Activated CD4-positive, alpha-beta T cell treated with anti-CD3 and anti-CD28 coated beads for 36 hours (primary cell): ENCODE measurements at regions of chr15 and their contacts with region 1.

Region 1: DNA sequence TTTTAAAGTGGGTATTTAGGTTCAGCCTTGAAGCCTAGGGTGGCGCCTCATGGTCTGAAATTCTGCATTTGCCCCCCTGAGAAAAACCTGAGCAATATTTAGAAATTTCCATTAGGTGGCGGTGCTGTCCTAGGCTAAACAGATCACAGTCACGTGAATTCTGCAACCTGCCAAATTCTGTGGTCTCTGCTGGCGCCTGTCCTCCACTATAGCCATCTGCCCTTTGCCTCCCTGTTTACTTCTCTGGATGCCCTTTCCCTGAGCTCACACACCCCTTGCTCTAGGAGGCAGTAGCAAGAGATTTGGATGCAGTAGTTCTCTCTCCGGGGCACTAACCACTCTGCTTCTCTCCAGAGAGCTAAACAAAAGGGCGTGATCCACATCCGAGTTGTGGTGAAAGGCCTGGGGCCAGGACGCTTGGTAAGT is 9.1 kb downstream of the MRPS11 start:
- DNase-seq: peak; percentile 28
- ATAC-seq: peak; percentile 60
- H3K4me3 Mint-ChIP-seq: no peak overlapping the region
- H3K27ac Mint-ChIP-seq: no peak overlapping the region
- H3K4me1 Mint-ChIP-seq: peaks cover 9% of the 10 kb centered on the region
- H3K27me3 Mint-ChIP-seq: no peaks in the 10 kb centered on the region

Region 2: DNA sequence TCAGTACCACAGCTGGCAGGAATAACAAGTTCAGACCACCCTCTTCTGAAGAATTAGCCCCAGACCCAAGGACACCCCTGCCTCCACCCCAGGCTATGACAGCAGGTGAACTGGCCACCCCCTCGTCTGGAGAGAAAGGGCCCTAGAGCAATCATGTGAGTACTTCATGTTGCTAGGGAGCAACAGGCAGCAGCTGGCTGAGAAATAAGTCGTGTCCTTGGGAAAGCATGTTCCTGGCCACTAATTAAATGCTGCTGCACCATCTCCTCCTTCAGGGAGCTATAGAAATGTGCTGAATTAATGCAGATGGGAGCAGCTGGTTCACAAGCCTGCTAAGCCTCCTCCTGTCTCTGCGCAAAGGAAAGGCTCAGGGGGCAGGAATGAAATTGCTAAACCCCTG is 22.3 kb after region 1 on chr15:
- CTCF ChIA-PET with region 1: no interaction called
- POLR2A ChIA-PET with region 1: no interaction called
- intact Hi-C with region 1: no loop called
- DNase-seq: no peak
- ATAC-seq: no peak
- H3K4me3 Mint-ChIP-seq: no peak overlapping the region
- H3K27ac Mint-ChIP-seq: no peak overlapping the region
- H3K4me1 Mint-ChIP-seq: no peaks in the 10 kb centered on the region
- H3K27me3 Mint-ChIP-seq: no peaks in the 10 kb centered on the region

Region 3: DNA sequence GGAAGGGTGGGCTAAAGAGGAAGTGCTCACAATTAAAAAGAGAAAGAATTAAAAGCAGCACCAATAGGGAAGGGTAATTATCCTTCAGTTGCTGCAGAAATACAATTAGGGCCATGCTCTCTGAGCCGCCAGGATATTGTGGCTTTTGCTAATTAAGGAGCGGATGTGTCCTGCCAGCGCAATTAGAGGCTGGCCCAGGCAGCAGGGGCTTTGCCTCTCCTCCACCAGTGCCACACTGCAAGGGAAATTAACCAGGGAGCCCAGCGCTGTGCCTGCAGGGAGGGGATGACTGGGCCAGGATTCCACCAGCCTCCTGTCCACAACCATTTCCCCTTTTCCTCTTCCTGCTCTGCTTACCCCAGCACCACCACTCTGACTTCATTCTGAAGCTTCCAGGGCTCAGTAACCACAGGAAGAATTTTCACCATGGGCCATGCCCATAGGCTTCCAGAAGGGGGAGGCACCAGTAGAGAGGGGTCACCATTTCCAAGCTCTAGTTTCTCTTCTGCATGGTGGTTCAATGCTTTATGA is 134.1 kb after region 1 on chr15:
- CTCF ChIA-PET with region 1: no interaction called
- POLR2A ChIA-PET with region 1: no interaction called
- intact Hi-C with region 1: loop called in 1 of 2 experiments (anchors 1 kb)
- DNase-seq: no peak
- ATAC-seq: no peak
- H3K4me3 Mint-ChIP-seq: no peak overlapping the region
- H3K27ac Mint-ChIP-seq: no peak overlapping the region
- H3K4me1 Mint-ChIP-seq: peaks cover 6% of the 10 kb centered on the region
- H3K27me3 Mint-ChIP-seq: peaks cover 55% of the 10 kb centered on the region

Region 4: GRCh38 chr15:88664151-88664778 is 187.6 kb after region 1 on chr15:
- CTCF ChIA-PET with region 1: interaction called, 4 read pairs
- POLR2A ChIA-PET with region 1: no interaction called
- intact Hi-C with region 1: loop called in 1 of 2 experiments (anchors 1 kb)
- DNase-seq: peak; percentile 68
- ATAC-seq: peak; percentile 90
- H3K4me3 Mint-ChIP-seq: no peak overlapping the region
- H3K27ac Mint-ChIP-seq: no peak overlapping the region
- H3K4me1 Mint-ChIP-seq: peaks cover 32% of the 10 kb centered on the region
- H3K27me3 Mint-ChIP-seq: peaks cover 5% of the 10 kb centered on the region

Region 5: GRCh38 chr15:88834211-88834812 is 357.7 kb after region 1 on chr15:
- CTCF ChIA-PET with region 1: no interaction called
- POLR2A ChIA-PET with region 1: no interaction called
- intact Hi-C with region 1: loop called in 1 of 2 experiments (anchors 5 kb)
- DNase-seq: peak; percentile 42
- ATAC-seq: peak; percentile 89
- H3K4me3 Mint-ChIP-seq: no peak overlapping the region
- H3K27ac Mint-ChIP-seq: no peak overlapping the region
- H3K4me1 Mint-ChIP-seq: peaks cover 4% of the 10 kb centered on the region
- H3K27me3 Mint-ChIP-seq: peaks cover 2% of the 10 kb centered on the region